ENCODE measurements at regions of chr1 and their contacts with region 1.

Region 1: GRCh38 chr1:107782217-107782845 is 182.6 kb downstream of the VAV3 start:
- DNase-seq: peak; percentile 44 to 71 (median 61)
- H3K4me3 ChIP-seq: no peak overlapping the region
- H3K4me3 Mint-ChIP-seq: no peak overlapping the region
- H3K27ac ChIP-seq: no peak overlapping the region
- H3K27ac Mint-ChIP-seq: no peak overlapping the region
- H3K4me1 ChIP-seq: peaks cover 29% of the 10 kb centered on the region
- H3K4me1 Mint-ChIP-seq: peaks cover 16 to 33% (median 25%) of the 10 kb centered on the region in 4 donors
- H3K27me3 ChIP-seq: no peaks in the 10 kb centered on the region
- H3K27me3 Mint-ChIP-seq: no peaks in the 10 kb centered on the region

Region 2: GRCh38 chr1:107795994-107796393 is 13.7 kb after region 1 on chr1:
- CTCF ChIA-PET with region 1: interaction called, 10 read pairs
- POLR2A ChIA-PET with region 1: interaction called, 3 read pairs
- intact Hi-C with region 1: no loop called
- DNase-seq: peak in 1 of 5 donors; percentile 19
- H3K4me3 ChIP-seq: no peak overlapping the region
- H3K4me3 Mint-ChIP-seq: no peak overlapping the region
- H3K27ac ChIP-seq: no peak overlapping the region
- H3K27ac Mint-ChIP-seq: peak overlapping the region in 1 of 7 donors; percentile 81
- H3K4me1 ChIP-seq: no peaks in the 10 kb centered on the region
- H3K4me1 Mint-ChIP-seq: peaks cover 0 to 11% (median 7%) of the 10 kb centered on the region in 4 donors
- H3K27me3 ChIP-seq: no peaks in the 10 kb centered on the region
- H3K27me3 Mint-ChIP-seq: no peaks in the 10 kb centered on the region

Region 3: GRCh38 chr1:107963601-107964335 is 181.4 kb after region 1 on chr1:
- CTCF ChIA-PET with region 1: interaction called, 24 read pairs
- POLR2A ChIA-PET with region 1: interaction called, 10 read pairs
- intact Hi-C with region 1: loop called (anchors 5 kb)
- DNase-seq: peak; percentile 44 to 64 (median 58)
- H3K4me3 ChIP-seq: peak overlapping the region; percentile 48 to 78
- H3K4me3 Mint-ChIP-seq: peak overlapping the region; percentile 90 to 99 (median 93)
- H3K27ac ChIP-seq: peak overlapping the region; percentile 37
- H3K27ac Mint-ChIP-seq: peak overlapping the region; percentile 72 to 93 (median 89)
- H3K4me1 ChIP-seq: peaks cover 21% of the 10 kb centered on the region
- H3K4me1 Mint-ChIP-seq: peaks cover 17 to 34% (median 24%) of the 10 kb centered on the region in 4 donors
- H3K27me3 ChIP-seq: no peaks in the 10 kb centered on the region
- H3K27me3 Mint-ChIP-seq: peaks cover 3 to 4% of the 10 kb centered on the region in 2 donors

Region 4: GRCh38 chr1:108075055-108075454 is 292.7 kb after region 1 on chr1:
- CTCF ChIA-PET with region 1: interaction called, 14 read pairs
- POLR2A ChIA-PET with region 1: interaction called, 3 read pairs
- intact Hi-C with region 1: no loop called
- DNase-seq: no peak
- H3K4me3 ChIP-seq: no peak overlapping the region
- H3K4me3 Mint-ChIP-seq: no peak overlapping the region
- H3K27ac ChIP-seq: no peak overlapping the region
- H3K27ac Mint-ChIP-seq: no peak overlapping the region
- H3K4me1 ChIP-seq: peaks cover 35% of the 10 kb centered on the region
- H3K4me1 Mint-ChIP-seq: peaks cover 21 to 32% (median 27%) of the 10 kb centered on the region in 4 donors
- H3K27me3 ChIP-seq: no peaks in the 10 kb centered on the region
- H3K27me3 Mint-ChIP-seq: no peaks in the 10 kb centered on the region

Region 5: DNA sequence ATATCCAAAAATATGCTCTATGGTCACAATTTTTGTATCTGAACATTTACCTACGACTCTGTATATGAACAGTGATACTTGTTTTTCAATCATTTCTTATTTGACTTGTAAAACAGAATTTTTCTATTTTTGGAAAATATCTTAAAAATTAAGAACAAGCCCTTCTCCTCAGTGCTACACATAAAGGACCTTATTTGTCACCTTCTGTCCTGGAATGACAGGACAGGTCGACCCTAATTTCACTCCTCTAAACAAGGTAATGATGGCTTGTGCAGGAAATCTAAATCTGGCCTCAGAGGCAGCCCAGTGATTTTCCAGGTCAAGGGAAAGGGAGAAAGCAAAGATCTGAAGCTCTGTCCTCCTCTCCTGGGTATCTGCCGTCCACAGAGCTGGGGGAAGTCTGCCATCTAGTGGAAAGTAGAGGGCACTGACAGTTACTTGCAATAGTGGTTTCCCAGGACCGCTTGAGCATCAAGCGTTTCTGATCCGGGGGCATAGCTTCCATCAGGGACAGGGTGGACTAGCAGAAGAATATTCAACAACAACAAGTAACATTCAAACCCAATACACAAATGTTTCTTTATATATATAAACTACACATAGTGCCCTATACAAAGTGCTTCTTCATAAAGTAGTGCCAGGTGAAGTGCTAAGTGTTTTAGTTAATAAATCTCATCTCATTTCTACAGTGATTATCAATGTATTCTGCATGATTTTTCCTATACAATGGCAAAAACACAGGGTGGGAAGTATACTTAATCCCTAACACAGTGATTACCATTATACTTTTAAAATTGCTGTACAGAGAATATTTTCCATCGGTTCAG is 343.2 kb after region 1 on chr1:
- CTCF ChIA-PET with region 1: interaction called, 614 read pairs
- POLR2A ChIA-PET with region 1: interaction called, 18 read pairs
- intact Hi-C with region 1: loop called (anchors 1 kb)
- DNase-seq: peak; percentile 53 to 72 (median 67)
- H3K4me3 ChIP-seq: no peak overlapping the region
- H3K4me3 Mint-ChIP-seq: no peak overlapping the region
- H3K27ac ChIP-seq: no peak overlapping the region
- H3K27ac Mint-ChIP-seq: peak overlapping the region in 1 of 7 donors; percentile 18
- H3K4me1 ChIP-seq: no peaks in the 10 kb centered on the region
- H3K4me1 Mint-ChIP-seq: peaks cover 0 to 6% (median 5%) of the 10 kb centered on the region in 4 donors
- H3K27me3 ChIP-seq: no peaks in the 10 kb centered on the region
- H3K27me3 Mint-ChIP-seq: peaks cover 0 to 2% of the 10 kb centered on the region in 2 donors

Region 6: DNA sequence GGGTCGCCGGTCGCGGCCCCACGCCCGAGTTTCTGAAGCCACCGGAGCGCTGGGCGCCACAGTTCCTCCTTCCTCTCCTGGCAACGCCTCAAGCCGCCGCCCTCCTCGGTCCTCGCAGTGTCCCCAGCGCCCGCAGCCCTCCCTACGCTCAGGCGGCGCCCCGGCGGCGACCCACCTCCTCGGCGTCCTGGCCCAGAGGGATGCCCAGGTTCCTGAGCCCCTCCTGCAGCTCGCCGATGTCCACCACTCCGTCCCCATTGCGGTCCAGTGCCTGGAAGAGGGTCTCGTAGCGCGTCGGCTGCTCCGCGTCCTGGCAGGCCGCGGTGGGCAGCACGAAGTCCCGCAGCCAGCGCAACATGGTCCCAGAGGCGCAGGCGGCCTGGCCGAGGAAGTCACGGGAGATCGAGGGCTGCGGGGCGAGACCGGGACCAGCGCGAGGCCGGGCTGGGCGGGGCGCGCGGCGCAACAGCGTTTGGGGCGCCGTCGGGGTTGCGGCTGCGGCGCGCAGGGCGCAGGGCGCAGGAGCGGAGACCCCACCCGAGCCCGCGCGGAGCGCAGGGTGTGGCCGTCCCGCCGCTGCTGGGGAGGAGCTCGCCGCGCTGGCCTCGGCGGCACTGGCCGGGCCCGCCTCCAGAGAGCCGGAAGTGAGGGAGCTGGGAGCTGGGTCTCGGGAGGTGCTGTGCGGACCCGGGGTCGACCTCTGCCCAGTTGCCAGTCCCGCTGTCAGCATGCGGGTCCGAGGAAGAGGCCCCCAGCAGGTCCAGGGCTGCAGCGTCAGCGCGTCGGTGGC is 417.6 kb after region 1 on chr1 and contains the start of gene SLC25A24:
- CTCF ChIA-PET with region 1: interaction called, 10 read pairs
- POLR2A ChIA-PET with region 1: interaction called, 6 read pairs
- intact Hi-C with region 1: loop called (anchors 10 kb)
- DNase-seq: peak; percentile 72 to 82 (median 78)
- H3K4me3 ChIP-seq: peak within 1 kb of the TSS; percentile 58 to 80
- H3K4me3 Mint-ChIP-seq: peak within 1 kb of the TSS; percentile 87 to 94 (median 92)
- H3K27ac ChIP-seq: peak within 1 kb of the TSS; percentile 64
- H3K27ac Mint-ChIP-seq: peak within 1 kb of the TSS; percentile 85 to 93 (median 90)
- H3K4me1 ChIP-seq: peaks cover 23% of the 10 kb centered on the region
- H3K4me1 Mint-ChIP-seq: peaks cover 31 to 45% (median 37%) of the 10 kb centered on the region in 4 donors
- H3K27me3 ChIP-seq: no peaks in the 10 kb centered on the region
- H3K27me3 Mint-ChIP-seq: no peaks in the 10 kb centered on the region
- total RNA-seq, gene SLC25A24: 18.6 to 19.1 TPM

Region 7: GRCh38 chr1:108512239-108512981 is 730.1 kb after region 1 on chr1:
- CTCF ChIA-PET with region 1: interaction called, 3 read pairs
- POLR2A ChIA-PET with region 1: no interaction called
- intact Hi-C with region 1: loop called (anchors 5 kb)
- DNase-seq: peak; percentile 35 to 58 (median 53)
- H3K4me3 ChIP-seq: no peak overlapping the region
- H3K4me3 Mint-ChIP-seq: no peak overlapping the region
- H3K27ac ChIP-seq: no peak overlapping the region
- H3K27ac Mint-ChIP-seq: no peak overlapping the region
- H3K4me1 ChIP-seq: no peaks in the 10 kb centered on the region
- H3K4me1 Mint-ChIP-seq: no peaks in the 10 kb centered on the region
- H3K27me3 ChIP-seq: no peaks in the 10 kb centered on the region
- H3K27me3 Mint-ChIP-seq: peaks cover 3 to 5% of the 10 kb centered on the region in 2 donors